ENCODE measurements at regions of chr5 and their contacts with region 1.

Region 1: DNA sequence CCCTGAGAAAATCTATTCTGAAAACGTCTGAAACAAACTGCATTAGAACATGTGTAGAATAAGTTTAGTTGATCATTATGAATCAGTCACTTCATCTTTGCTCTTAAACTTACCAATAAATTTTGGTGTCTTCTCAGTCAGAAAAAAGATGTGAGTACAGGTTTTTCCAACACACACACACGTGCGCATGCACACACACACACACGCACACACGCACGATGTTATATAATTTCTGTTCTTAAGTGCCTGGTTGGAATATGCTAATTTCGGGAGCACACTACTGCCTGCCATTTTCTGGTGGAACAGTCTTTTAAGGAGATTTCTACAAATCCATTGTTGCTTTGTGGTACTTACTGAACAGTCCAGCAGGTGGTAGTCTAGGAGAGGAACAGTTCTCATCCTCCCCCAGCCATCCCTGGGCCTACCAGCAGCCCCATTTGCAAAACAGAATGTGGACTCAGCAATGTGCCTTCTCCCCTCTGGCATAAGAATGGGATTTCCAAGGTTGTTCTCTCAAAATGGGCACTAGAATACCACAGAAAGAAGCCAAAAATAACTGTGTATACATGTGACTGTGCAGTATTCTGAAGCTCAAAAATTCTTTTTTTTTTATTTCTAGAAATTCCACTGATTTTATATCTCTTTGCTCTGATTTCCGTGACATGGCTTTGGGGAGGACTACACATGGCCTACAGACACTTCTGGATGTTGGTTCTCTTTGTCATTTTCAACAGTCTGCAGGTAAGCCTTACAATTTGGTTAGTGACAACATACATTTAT is 281.3 kb downstream of the ARRDC3 start:
- DNase-seq: peak; percentile 92
- H3K4me3 ChIP-seq: no peak overlapping the region
- H3K27ac ChIP-seq: no peak overlapping the region
- H3K4me1 ChIP-seq: peaks cover 7% of the 10 kb centered on the region
- H3K27me3 ChIP-seq: no peaks in the 10 kb centered on the region
- CTCF ChIP-seq: peak; percentile 85

Region 2: GRCh38 chr5:90866333-90866732 is 235.5 kb before region 1 on chr5:
- CTCF ChIA-PET with region 1: no interaction called
- POLR2A ChIA-PET with region 1: no interaction called
- intact Hi-C with region 1: loop called (anchors 5 kb)
- DNase-seq: peak; percentile 73
- H3K4me3 ChIP-seq: no peak overlapping the region
- H3K27ac ChIP-seq: no peak overlapping the region
- H3K4me1 ChIP-seq: peaks cover 2% of the 10 kb centered on the region
- H3K27me3 ChIP-seq: no peaks in the 10 kb centered on the region
- CTCF ChIP-seq: peak; percentile 58

Region 3: DNA sequence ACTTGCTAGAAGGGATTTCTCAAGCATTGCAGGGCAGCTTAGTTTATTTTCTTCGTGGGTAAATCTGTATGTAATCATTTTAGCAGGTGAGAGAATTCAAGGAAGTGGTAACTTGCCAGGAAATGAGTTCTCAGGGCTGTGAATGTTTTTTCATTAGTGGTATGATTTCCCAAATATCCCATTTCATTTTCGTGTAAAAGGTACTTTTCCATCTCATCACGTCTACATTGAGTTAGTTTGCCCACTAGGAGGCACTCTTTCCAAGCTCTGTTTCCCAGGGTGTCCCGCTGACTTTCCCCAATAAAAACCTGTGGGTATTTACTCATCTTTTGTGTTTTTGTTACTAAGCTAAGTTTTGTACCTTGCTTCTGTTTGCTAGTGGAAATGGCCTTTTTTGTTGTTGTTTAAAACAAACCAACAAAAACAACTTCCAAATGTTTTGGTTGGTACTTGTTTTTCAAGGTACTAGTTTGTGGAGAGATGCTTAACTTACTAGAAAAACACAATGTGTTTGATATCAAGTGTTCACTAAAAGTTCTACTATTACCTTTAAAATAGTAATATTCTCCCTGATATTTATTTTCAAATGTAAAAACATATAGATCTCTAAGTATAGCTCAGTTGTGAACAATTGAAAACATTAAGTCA is 169.6 kb before region 1 on chr5:
- CTCF ChIA-PET with region 1: no interaction called
- POLR2A ChIA-PET with region 1: no interaction called
- intact Hi-C with region 1: loop called (anchors 2 kb)
- DNase-seq: peak; percentile 82
- H3K4me3 ChIP-seq: no peak overlapping the region
- H3K27ac ChIP-seq: peak overlapping the region; percentile 2
- H3K4me1 ChIP-seq: peaks cover 11% of the 10 kb centered on the region
- H3K27me3 ChIP-seq: no peaks in the 10 kb centered on the region
- CTCF ChIP-seq: peak; percentile 85

Region 4: DNA sequence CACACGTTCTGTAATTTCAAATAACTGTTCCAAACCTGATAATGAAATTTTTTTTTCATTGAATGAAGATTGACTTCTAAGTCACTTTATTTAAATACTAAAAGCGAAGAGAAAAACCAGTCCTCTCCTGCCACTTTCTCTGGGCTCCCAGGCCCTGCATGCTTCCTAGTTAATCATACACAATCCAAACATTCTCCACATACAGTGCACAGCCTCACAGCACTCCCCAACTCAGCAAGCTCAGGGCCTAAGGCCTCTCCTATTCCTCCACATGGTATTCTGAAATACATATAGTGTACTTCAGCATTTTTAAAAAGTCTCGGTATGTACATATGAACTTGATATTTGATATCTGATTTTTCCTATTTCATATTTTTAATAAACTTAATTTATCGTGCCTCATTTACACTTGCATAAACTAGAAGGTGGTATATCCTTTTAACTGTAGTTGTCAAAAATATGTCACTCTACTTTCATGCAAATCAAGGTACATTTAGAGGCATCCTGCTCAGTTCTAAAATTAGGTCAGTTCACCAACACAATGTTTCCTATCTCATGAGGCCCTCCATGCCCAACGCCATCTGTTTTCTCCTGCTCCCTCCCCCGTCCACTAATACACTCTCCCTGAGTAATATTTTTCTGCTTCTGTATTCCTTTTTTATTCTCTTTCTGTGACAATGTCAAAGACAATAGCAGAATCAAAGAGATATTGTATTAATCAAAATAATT is 74.7 kb after region 1 on chr5:
- CTCF ChIA-PET with region 1: no interaction called
- POLR2A ChIA-PET with region 1: no interaction called
- intact Hi-C with region 1: loop called (anchors 1 kb)
- DNase-seq: no peak
- H3K4me3 ChIP-seq: no peak overlapping the region
- H3K27ac ChIP-seq: peak overlapping the region; percentile 44
- H3K4me1 ChIP-seq: peaks cover 45% of the 10 kb centered on the region
- H3K27me3 ChIP-seq: no peaks in the 10 kb centered on the region
- CTCF ChIP-seq: no peak

Region 5: DNA sequence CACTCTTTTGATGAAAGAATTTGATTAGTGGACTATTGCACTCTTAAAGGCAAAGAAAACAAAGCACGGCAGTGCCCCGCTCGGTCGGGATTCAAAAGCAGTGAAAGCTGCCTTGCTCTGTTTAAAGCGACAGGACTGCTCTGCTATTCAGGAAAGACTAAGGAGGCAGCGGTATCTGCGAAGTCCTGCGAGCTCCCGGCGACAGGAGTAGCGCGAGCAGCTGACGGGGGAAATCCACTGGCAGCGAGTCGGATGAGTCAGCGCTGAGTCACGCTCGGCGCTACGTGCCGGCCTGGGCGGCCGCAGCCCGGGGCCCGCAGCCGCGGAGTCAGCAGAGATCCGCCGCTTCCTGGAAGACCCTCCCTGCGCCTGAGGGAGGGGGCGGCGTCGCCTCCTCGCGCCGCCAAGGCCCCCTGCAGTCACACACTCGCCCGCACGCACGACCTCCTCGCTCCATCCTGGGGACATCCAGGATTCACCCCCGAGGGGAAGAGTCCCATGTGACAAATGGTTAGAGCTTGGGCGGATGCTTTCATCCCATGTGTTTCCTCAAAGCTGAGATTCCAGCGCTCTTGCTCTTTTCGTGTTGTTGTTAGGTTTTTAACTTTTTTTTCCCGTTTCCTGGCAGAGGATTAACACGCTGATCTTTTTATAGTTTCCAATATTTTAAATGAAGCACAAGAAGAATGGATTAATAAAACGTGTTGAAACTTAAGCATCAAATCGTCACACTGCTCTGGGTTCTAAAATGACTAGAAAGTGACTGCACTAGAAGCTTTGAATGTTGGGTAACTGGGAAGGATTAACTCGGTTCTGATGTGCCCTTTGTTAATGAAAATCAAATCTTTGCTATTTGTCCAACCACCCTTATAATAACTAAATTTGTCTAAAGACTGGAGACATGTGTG is 178.8 kb after region 1 on chr5:
- CTCF ChIA-PET with region 1: no interaction called
- POLR2A ChIA-PET with region 1: no interaction called
- intact Hi-C with region 1: loop called (anchors 10 kb)
- DNase-seq: peak; percentile 96
- H3K4me3 ChIP-seq: peak overlapping the region; percentile 50
- H3K27ac ChIP-seq: peak overlapping the region; percentile 87
- H3K4me1 ChIP-seq: peaks cover 22% of the 10 kb centered on the region
- H3K27me3 ChIP-seq: no peaks in the 10 kb centered on the region
- CTCF ChIP-seq: no peak

Region 6: GRCh38 chr5:91311697-91312501 is 210.1 kb after region 1 on chr5:
- CTCF ChIA-PET with region 1: no interaction called
- POLR2A ChIA-PET with region 1: no interaction called
- intact Hi-C with region 1: loop called (anchors 10 kb)
- DNase-seq: peak; percentile 75
- H3K4me3 ChIP-seq: peak overlapping the region; percentile 2
- H3K27ac ChIP-seq: peak overlapping the region; percentile 77
- H3K4me1 ChIP-seq: peaks cover 38% of the 10 kb centered on the region
- H3K27me3 ChIP-seq: no peaks in the 10 kb centered on the region
- CTCF ChIP-seq: peak; percentile 32; the same call in 1 of the 2 replicates

Region 7: DNA sequence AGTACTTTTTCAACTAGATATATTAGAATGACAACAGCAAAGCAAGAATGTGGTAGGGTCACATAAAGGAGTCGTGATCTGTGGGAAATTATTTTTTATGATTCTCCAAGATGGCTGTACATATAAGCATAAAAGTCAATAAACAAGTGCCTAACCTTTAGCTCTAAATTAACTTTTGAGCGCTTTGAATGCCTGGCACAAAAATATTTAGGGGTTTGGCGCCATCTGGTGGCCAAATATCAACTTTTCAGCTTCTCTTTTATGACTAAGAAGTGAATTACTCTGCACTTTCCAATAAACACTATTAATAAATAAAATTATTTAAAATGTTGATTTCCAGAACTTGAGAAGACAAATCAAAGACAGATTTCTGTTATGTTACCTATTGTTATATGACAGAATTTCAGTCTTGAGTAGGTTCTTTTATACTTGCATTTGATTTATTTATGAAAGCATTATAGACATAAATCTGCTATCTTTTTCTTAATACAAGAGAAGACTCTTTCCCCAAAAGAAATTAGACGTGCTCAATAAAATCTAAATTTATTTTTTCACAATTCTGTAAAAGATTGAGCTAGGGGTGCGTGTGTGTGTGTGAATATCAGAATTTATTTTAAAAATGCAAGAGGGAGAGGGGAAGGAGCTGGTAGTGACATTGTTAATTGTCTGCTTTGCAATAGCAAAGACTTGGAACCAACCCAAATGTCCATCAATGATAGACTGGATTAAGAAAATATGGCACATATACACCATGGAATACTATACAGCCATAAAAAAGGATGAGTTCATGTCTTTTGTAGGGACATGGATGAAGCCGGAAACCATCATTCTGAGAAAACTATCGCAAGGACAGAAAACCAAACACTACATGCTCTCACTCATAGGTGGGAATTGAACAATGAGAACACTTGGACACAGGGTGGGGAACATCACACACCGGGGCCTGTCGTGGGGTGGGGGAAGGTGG is 318.1 kb after region 1 on chr5:
- CTCF ChIA-PET with region 1: interaction called, 4 read pairs
- POLR2A ChIA-PET with region 1: no interaction called
- intact Hi-C with region 1: loop called (anchors 1 kb)
- DNase-seq: peak; percentile 86
- H3K4me3 ChIP-seq: no peak overlapping the region
- H3K27ac ChIP-seq: no peak overlapping the region
- H3K4me1 ChIP-seq: peaks cover 31% of the 10 kb centered on the region
- H3K27me3 ChIP-seq: no peaks in the 10 kb centered on the region
- CTCF ChIP-seq: peak; percentile 71

Measured in A673 (cell line).